Breast epithelium (tissue), 4 donors: ENCODE measurements at regions of chr9 and their contacts with region 1.

Region 1: DNA sequence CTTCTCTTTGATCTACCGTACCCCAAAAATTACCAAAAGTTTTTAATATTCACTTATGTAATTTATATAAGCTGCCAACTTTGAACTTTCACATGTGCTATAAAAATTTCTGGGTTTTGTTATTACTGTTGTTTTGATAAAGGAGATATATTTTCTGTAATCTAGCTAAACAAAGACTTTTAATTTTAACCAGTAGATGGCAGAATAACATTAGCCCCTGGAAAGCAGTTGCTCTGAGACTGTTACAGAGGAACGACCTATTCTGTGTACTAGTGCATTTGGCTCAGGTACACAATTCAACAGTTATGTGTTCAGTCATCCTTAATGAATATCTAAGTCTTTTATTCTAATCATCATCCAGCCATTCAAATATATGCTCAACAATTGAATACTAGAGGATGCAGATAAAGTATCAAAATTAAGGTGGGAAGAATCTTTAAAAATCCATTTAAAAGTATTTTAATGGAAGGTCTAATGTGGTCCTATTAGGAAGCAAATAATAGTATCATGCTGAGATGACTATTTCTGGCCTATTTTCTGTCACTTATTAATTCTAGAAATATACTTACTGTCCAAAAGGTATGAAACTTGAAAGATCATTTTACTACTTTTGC is 8.6 kb downstream of the KLHL9 start:
- DNase-seq: no peak
- H3K4me3 ChIP-seq: no peak overlapping the region
- H3K27ac ChIP-seq: no peak overlapping the region
- H3K4me1 ChIP-seq: peaks cover 3 to 5% of the 10 kb centered on the region in 2 donors
- H3K27me3 ChIP-seq: no peaks in the 10 kb centered on the region
- CTCF ChIP-seq: peak in 2 of 3 donors; percentile 39 to 55
- POLR2A ChIP-seq: no peak

Region 2: DNA sequence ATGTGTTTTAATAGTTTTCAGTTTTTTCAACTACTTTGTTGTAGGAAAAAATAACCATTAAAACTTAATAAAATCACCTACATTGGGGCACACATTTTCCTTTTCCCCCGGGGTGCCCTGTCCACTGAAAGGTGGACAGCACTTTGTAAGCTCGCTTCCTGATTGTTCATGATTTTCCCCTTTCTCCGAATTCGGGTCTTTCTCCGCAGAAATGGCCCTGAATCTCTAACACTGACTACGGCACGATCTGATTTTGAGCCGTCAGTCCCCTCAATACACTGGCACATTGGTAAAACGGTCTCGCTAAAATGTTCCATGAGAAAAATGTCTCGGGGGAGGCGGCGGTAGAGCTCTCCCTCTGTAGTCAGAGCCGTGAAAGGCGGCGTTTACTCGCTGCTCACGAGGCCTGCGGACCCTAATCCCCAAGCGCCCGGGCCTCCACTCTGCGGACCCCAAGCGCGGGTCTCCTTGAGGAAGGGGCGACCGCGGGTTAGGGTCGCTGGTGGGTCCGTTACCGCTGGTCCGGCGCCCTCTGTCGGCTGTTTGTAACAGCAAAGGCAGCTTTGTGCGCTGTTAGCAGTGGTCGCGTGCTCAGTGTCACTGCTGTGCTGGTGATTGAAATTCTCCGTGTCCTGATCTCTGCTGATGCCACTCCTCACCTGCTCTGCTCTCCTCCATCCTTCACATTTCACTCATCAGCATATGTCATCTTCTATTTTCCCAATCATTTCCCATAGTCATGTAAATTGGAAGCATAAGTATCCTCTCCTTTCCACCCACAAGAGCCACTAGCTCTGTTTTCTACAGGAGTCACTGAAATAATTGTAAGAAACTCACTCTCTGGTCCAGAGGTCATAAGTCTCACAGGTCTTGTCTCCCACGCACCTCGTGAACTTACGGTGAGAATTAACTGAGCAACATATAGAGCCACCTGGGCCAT is 69.4 kb after region 1 on chr9:
- intact Hi-C with region 1: loop called (anchors 5 kb)
- DNase-seq: no peak
- H3K4me3 ChIP-seq: peak overlapping the region; percentile 41 to 65 (median 45)
- H3K27ac ChIP-seq: no peak overlapping the region
- H3K4me1 ChIP-seq: no peaks in the 10 kb centered on the region
- H3K27me3 ChIP-seq: peaks cover 0 to 69% of the 10 kb centered on the region in 2 donors
- CTCF ChIP-seq: peak; percentile 24 to 77 (median 41)
- POLR2A ChIP-seq: no peak